Activated CD4-positive, alpha-beta T cell treated with anti-CD3 and anti-CD28 coated beads for 36 hours (primary cell): ENCODE measurements at regions of chr5 and their contacts with region 1.

Region 1: GRCh38 chr5:141960449-141961202 is 2.6 kb upstream of the PCDH12 start:
- DNase-seq: peak; percentile 95
- ATAC-seq: peak; percentile 88
- H3K4me3 Mint-ChIP-seq: peak overlapping the region; percentile 10
- H3K27ac Mint-ChIP-seq: peak overlapping the region; percentile 82
- H3K4me1 Mint-ChIP-seq: peaks cover 38% of the 10 kb centered on the region
- H3K27me3 Mint-ChIP-seq: no peaks in the 10 kb centered on the region

Region 2: GRCh38 chr5:141681695-141682641 is 278.7 kb before region 1 on chr5 and contains the start of gene ARAP3:
- CTCF ChIA-PET with region 1: interaction called, 15 read pairs
- POLR2A ChIA-PET with region 1: no interaction called
- intact Hi-C with region 1: no loop called
- DNase-seq: peak; percentile 59
- ATAC-seq: peak; percentile 63
- H3K4me3 Mint-ChIP-seq: peak within 1 kb of the TSS; percentile 60
- H3K27ac Mint-ChIP-seq: peak within 1 kb of the TSS; percentile 62
- H3K4me1 Mint-ChIP-seq: peaks cover 19% of the 10 kb centered on the region
- H3K27me3 Mint-ChIP-seq: peaks cover 3% of the 10 kb centered on the region
- total RNA-seq, gene ARAP3: 3.2 TPM

Region 3: GRCh38 chr5:141889282-141889871 is 71.2 kb before region 1 on chr5:
- CTCF ChIA-PET with region 1: interaction called, 29 read pairs
- POLR2A ChIA-PET with region 1: no interaction called
- intact Hi-C with region 1: loop called (anchors 1 to 2 kb)
- DNase-seq: no peak
- ATAC-seq: no peak
- H3K4me3 Mint-ChIP-seq: no peak overlapping the region
- H3K27ac Mint-ChIP-seq: no peak overlapping the region
- H3K4me1 Mint-ChIP-seq: no peaks in the 10 kb centered on the region
- H3K27me3 Mint-ChIP-seq: peaks cover 27% of the 10 kb centered on the region

Region 4: GRCh38 chr5:141940695-141941271 is 19.8 kb before region 1 on chr5:
- CTCF ChIA-PET with region 1: interaction called, 35 read pairs
- POLR2A ChIA-PET with region 1: no interaction called
- intact Hi-C with region 1: no loop called
- DNase-seq: no peak
- ATAC-seq: no peak
- H3K4me3 Mint-ChIP-seq: no peak overlapping the region
- H3K27ac Mint-ChIP-seq: no peak overlapping the region
- H3K4me1 Mint-ChIP-seq: peaks cover 3% of the 10 kb centered on the region
- H3K27me3 Mint-ChIP-seq: no peaks in the 10 kb centered on the region

Region 5: GRCh38 chr5:142542906-142543305 is 582.3 kb after region 1 on chr5:
- CTCF ChIA-PET with region 1: no interaction called
- POLR2A ChIA-PET with region 1: no interaction called
- intact Hi-C with region 1: no loop called
- DNase-seq: no peak
- ATAC-seq: no peak
- H3K4me3 Mint-ChIP-seq: no peak overlapping the region
- H3K27ac Mint-ChIP-seq: no peak overlapping the region
- H3K4me1 Mint-ChIP-seq: no peaks in the 10 kb centered on the region
- H3K27me3 Mint-ChIP-seq: peaks cover 2% of the 10 kb centered on the region